BJ (cell line): ENCODE measurements at regions of chr6 and their contacts with region 1.

Region 1: GRCh38 chr6:16183187-16183664 is 54.3 kb downstream of the MYLIP start:
- DNase-seq: peak; percentile 53
- H3K4me3 ChIP-seq: no peak overlapping the region
- H3K27me3 ChIP-seq: peaks cover 8% of the 10 kb centered on the region
- CTCF ChIP-seq: peak; percentile 65

Region 2: GRCh38 chr6:15682965-15683822 is 500.0 kb before region 1 on chr6:
- CTCF ChIA-PET with region 1: interaction called, 11 read pairs
- POLR2A ChIA-PET with region 1: no interaction called
- DNase-seq: no peak
- H3K4me3 ChIP-seq: no peak overlapping the region
- H3K27me3 ChIP-seq: peaks cover 2% of the 10 kb centered on the region; the same call in 1 of the 2 replicates
- CTCF ChIP-seq: no peak

Region 3: GRCh38 chr6:15691250-15691869 is 491.9 kb before region 1 on chr6:
- CTCF ChIA-PET with region 1: interaction called, 81 read pairs
- POLR2A ChIA-PET with region 1: interaction called, 3 read pairs
- DNase-seq: peak; percentile 10
- H3K4me3 ChIP-seq: peak overlapping the region; percentile 37
- H3K27me3 ChIP-seq: no peaks in the 10 kb centered on the region
- CTCF ChIP-seq: peak; percentile 100

Region 4: DNA sequence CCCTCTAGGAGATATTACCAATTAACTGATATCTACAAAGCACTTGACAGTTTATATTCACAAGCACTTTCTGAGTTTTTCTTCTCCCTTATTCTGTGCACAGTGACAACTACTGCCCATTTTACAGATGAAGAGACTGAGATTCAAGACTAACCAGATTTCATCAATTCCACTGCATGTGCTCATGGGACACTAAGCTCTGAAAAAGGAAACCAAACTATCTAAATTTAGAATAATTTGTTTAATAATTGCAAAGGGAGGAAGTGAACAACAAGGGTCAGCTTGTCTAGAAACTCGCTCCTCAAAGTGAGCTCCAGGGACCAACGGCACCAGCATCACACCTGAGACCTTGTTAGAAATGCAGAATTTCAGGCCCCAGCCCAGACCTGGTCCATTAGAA is 105.2 kb before region 1 on chr6:
- CTCF ChIA-PET with region 1: no interaction called
- POLR2A ChIA-PET with region 1: no interaction called
- DNase-seq: no peak
- H3K4me3 ChIP-seq: no peak overlapping the region
- H3K27me3 ChIP-seq: peaks cover 3% of the 10 kb centered on the region
- CTCF ChIP-seq: no peak

Region 5: GRCh38 chr6:16128759-16129622 is 54.2 kb before region 1 on chr6 and contains the start of gene MYLIP:
- CTCF ChIA-PET with region 1: interaction called, 18 read pairs
- POLR2A ChIA-PET with region 1: no interaction called
- DNase-seq: no peak
- H3K4me3 ChIP-seq: peak within 1 kb of the TSS; percentile 84
- H3K27me3 ChIP-seq: peaks cover 27% of the 10 kb centered on the region
- CTCF ChIP-seq: peak; percentile 61
- polyA plus RNA-seq, gene MYLIP: 5.0 and 6.5 TPM in 2 replicates

Region 6: GRCh38 chr6:16200321-16200883 is 17.2 kb after region 1 on chr6:
- CTCF ChIA-PET with region 1: interaction called, 27 read pairs
- POLR2A ChIA-PET with region 1: no interaction called
- DNase-seq: no peak
- H3K4me3 ChIP-seq: no peak overlapping the region
- H3K27me3 ChIP-seq: peaks cover 4% of the 10 kb centered on the region
- CTCF ChIP-seq: no peak

Region 7: DNA sequence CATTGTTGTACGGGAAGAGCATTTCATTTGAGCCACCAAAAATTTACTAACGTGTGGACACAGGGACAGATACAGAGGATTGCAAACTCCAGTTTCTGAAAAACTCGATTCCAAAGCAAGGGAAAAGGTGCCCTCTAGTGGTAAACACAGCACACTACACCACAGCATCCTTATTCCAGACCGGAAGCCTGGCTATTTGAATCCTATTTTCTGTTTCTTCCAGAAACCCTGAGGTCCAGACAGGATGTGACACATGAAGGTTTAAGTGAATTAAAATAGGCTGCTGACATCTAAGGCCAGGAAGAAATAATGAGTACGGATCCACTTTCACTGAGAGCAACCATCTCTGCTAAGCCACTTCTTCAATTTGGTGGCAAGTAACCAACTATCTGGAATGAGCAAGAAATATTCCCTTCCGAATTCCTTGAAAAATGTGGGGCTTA is 23.4 kb after region 1 on chr6:
- CTCF ChIA-PET with region 1: interaction called, 27 read pairs
- POLR2A ChIA-PET with region 1: no interaction called
- DNase-seq: peak; percentile 56
- H3K4me3 ChIP-seq: no peak overlapping the region
- H3K27me3 ChIP-seq: peaks cover 3% of the 10 kb centered on the region; the same call in 1 of the 2 replicates
- CTCF ChIP-seq: peak; percentile 91